ENCODE measurements at regions of chr4 and their contacts with region 1.

Region 1: DNA sequence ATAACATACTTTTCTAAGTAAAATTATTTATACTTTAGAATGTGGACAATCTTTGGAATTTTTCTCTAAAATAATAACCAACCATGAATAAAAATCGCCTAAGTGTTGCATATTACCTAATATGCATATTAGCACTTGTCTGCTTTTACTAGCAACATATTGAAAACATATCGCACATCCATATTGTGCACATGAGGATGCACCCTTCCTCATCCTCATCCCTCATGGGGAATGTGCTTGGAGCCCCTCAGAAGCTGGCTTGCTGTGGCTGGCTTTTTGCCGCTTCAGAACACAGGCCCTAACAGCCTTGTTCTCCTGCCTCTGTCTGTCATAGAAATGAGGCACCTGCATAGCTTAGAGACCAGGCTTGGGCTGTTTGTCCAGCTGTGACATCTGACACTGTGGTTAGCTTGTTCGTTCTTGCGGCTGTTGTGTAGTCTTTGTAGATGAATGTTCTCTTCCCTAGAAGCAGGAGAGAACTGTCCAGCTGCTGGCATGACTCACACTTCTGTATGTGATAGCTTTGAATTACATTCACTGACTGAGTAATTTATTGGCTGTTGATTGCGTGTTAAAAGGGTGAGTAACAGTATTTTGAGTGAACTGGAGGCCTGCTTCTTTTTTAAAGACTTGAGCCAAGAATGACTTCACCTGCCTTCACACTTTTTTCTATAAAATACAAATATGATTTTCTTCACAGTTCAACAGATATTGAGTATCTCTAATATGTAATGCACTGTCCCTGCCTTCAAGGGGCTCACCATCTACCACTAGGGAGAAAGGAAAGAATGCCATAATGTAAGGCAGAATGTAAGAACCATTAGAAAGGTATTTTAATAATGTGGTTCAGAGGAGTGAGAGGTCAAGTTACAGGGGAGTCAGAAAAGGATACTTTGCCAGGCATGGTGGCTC is 81.9 kb downstream of the HMGB2 start:
- DNase-seq: peak; percentile 98
- H3K4me3 ChIP-seq: no peak overlapping the region
- H3K27ac ChIP-seq: peak overlapping the region; percentile 53
- H3K27me3 ChIP-seq: no peaks in the 10 kb centered on the region
- CTCF ChIP-seq: no peak

Region 2: DNA sequence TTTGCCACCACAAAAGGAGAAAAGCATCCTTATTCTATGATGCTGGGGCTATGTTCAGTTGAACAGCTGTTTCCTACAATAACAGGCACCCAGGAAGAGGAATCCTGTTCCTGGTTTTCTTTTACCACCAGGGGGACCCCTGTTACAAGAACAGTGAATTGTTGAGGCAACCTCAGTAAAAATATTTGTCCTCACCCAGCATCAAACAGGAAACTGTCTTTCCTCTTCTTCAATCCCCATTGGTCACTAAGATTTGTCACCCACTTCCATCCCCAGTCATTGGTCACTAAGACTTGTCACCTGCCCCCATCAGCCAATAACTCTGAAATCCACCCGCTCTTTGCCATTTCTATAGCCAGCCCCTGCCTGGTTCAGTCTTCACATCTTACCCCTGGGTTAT is 227.1 kb before region 1 on chr4:
- CTCF ChIA-PET with region 1: interaction called, 103 read pairs
- POLR2A ChIA-PET with region 1: no interaction called
- DNase-seq: peak; percentile 65
- H3K4me3 ChIP-seq: no peak overlapping the region
- H3K27ac ChIP-seq: no peak overlapping the region
- H3K27me3 ChIP-seq: peaks cover 7% of the 10 kb centered on the region
- CTCF ChIP-seq: peak; percentile 79

Measured in AG04450 (cell line).